ENCODE measurements at regions of chr12 and their contacts with region 1.

Region 1: DNA sequence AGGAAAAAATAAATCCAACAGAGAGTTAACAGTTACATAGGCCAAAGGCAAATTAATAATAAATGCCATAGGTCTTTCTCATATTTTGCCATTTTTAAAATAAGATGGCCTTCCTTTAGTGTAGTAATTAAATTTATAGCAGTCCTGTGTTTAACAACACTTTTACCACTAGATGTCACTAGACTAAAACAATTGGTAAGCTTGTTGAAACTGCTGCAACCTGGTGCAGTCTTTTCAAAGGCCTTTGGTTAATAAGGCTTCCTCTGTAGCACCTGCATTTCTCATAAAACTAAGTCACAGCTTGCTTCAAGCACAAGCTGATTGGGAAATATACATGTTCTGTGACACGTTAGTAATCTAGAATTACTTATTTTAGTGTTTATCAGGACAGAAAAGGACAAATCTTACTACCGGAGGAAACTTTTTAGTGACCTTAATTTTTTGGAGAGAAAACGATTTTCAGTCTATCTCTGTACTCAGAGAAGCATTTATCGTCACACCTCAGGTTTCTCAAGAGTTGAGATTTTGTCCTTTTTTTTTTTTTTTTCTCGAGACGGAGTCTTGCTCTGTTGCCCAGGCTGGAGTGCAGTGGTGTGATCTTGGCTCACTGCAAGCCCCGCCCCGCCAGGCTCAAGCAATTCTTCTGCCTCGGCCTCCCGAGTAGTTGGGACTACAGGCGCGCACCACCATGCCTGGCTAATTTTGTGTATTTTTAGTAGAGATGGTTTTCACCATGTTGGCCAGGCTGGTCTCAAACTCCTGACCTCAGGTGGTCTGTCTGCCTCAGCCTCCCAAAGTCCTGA is 20.0 kb downstream of the BORCS5 start:
- DNase-seq: peak; percentile 60
- H3K4me3 Mint-ChIP-seq: no peak overlapping the region
- H3K27ac Mint-ChIP-seq: peak overlapping the region; percentile 71
- H3K4me1 Mint-ChIP-seq: peaks cover 55% of the 10 kb centered on the region
- H3K27me3 Mint-ChIP-seq: no peaks in the 10 kb centered on the region

Region 2: GRCh38 chr12:12159988-12160387 is 216.9 kb before region 1 on chr12:
- CTCF ChIA-PET with region 1: no interaction called
- POLR2A ChIA-PET with region 1: no interaction called
- DNase-seq: no peak
- H3K4me3 Mint-ChIP-seq: no peak overlapping the region
- H3K27ac Mint-ChIP-seq: no peak overlapping the region
- H3K4me1 Mint-ChIP-seq: no peaks in the 10 kb centered on the region
- H3K27me3 Mint-ChIP-seq: peaks cover 23% of the 10 kb centered on the region

Region 3: DNA sequence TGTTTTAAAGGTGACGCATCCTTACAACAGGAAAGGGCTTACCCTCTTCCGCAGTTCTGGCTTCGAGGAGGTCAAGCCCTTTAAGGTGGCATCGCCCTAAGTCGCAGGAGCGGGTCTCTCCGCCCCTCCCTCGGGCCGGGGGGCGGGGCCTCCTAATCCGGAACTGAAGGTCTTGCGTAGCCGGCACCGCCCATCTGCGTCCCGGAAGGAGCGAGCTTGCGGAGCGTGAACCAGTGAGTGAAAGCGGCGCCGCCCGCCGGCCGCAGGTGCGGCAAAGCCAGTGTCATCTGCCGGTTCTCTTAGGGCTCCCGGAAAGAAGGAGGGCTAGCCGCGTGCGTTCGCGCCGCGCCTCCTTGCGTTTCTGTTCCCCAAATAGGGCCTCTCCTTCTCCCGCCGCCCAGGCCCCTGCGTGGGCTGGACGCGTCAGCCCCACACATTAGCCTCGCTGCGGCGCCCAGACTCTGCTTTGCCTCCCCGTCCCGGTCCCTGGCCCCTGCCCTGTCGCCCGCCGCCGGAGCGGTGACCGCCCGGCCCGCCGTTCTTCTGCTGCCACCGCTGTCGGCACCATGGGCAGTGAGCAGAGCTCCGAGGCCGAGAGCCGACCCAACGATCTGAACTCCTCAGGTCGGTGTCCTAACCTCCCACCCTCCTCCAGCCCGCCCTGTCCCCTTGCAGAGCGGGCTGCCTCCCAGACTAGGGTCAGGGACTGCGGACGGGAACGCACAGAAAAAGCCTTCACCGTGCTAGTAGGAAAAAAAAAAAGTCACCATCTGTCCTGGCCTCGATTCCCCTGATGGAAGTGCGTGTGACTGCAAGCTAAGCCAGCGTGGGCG is 19.7 kb before region 1 on chr12 and contains the start of gene BORCS5:
- CTCF ChIA-PET with region 1: interaction called, 18 read pairs
- POLR2A ChIA-PET with region 1: interaction called, 4 read pairs
- DNase-seq: peak; percentile 99
- H3K4me3 Mint-ChIP-seq: peak within 1 kb of the TSS; percentile 85
- H3K27ac Mint-ChIP-seq: peak within 1 kb of the TSS; percentile 96
- H3K4me1 Mint-ChIP-seq: peaks cover 49% of the 10 kb centered on the region
- H3K27me3 Mint-ChIP-seq: no peaks in the 10 kb centered on the region
- total RNA-seq, gene BORCS5: 25.7 to 28.4 TPM

Region 4: GRCh38 chr12:12365931-12366431 is 10.9 kb before region 1 on chr12:
- CTCF ChIA-PET with region 1: interaction called, 18 read pairs
- POLR2A ChIA-PET with region 1: no interaction called
- DNase-seq: peak; percentile 19
- H3K4me3 Mint-ChIP-seq: no peak overlapping the region
- H3K27ac Mint-ChIP-seq: peak overlapping the region; percentile 50
- H3K4me1 Mint-ChIP-seq: peaks cover 53% of the 10 kb centered on the region
- H3K27me3 Mint-ChIP-seq: no peaks in the 10 kb centered on the region

Region 5: GRCh38 chr12:12474931-12475795 is 98.3 kb after region 1 on chr12:
- CTCF ChIA-PET with region 1: interaction called, 28 read pairs
- POLR2A ChIA-PET with region 1: no interaction called
- DNase-seq: peak; percentile 57
- H3K4me3 Mint-ChIP-seq: peak overlapping the region; percentile 41
- H3K27ac Mint-ChIP-seq: peak overlapping the region; percentile 93
- H3K4me1 Mint-ChIP-seq: peaks cover 73% of the 10 kb centered on the region
- H3K27me3 Mint-ChIP-seq: no peaks in the 10 kb centered on the region

Region 6: DNA sequence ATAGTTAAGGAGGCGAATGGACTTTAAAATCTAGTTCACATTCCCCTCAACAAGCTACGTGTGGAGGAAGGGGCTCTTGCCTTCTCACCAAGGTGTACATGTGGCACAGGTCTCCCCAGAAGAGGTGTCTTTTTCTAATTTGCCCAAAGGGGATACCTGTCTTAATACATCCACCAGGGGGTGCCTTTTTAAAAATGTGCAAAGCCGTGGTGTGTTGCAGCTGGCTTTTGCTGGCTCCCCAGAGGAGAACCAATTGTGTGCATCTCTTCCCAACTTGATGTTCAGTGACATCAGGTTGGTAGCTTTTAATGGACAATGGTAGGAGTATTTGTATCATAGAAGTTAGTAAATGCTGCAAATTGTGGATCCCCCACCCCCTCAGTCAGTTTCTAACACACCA is 268.6 kb after region 1 on chr12:
- CTCF ChIA-PET with region 1: interaction called, 10 read pairs
- POLR2A ChIA-PET with region 1: no interaction called
- DNase-seq: peak; percentile 41
- H3K4me3 Mint-ChIP-seq: no peak overlapping the region
- H3K27ac Mint-ChIP-seq: peak overlapping the region; percentile 54
- H3K4me1 Mint-ChIP-seq: peaks cover 8% of the 10 kb centered on the region
- H3K27me3 Mint-ChIP-seq: no peaks in the 10 kb centered on the region

Region 7: GRCh38 chr12:12654691-12655460 is 278.0 kb after region 1 on chr12:
- CTCF ChIA-PET with region 1: interaction called, 10 read pairs
- POLR2A ChIA-PET with region 1: no interaction called
- DNase-seq: no peak
- H3K4me3 Mint-ChIP-seq: no peak overlapping the region
- H3K27ac Mint-ChIP-seq: no peak overlapping the region
- H3K4me1 Mint-ChIP-seq: peaks cover 17% of the 10 kb centered on the region
- H3K27me3 Mint-ChIP-seq: no peaks in the 10 kb centered on the region